Calu3 (cell line): ENCODE measurements at regions of chr7 and their contacts with region 1.

Region 1: DNA sequence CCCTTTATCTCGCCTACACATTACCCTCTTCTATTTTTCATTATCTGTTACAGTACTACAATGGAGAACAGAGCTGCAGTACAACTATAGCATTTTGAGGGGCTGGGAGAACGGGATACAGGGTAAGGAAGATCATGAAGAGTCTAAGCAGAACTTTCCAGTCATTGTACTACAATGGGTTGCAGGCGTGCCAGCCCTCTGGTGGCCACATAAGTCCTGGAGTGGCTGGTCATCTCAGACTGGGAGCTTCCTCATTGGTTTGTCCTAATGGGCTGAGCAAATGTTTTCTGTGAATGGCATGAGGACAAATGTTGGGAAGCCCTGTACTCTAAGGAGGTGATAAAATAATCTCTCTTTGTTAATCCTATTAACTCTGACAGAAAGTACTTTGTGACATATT is 33.0 kb downstream of the TMEM106B start:
- DNase-seq: peak; percentile 70
- H3K4me3 Mint-ChIP-seq: no peak overlapping the region
- H3K27ac Mint-ChIP-seq: no peak overlapping the region
- H3K4me1 Mint-ChIP-seq: no peaks in the 10 kb centered on the region
- H3K27me3 Mint-ChIP-seq: no peaks in the 10 kb centered on the region
- CTCF ChIP-seq: peak; percentile 71

Region 2: GRCh38 chr7:11427686-11428273 is 816.3 kb before region 1 on chr7:
- CTCF ChIA-PET with region 1: no interaction called
- intact Hi-C with region 1: loop called (anchors 10 kb)
- DNase-seq: peak; percentile 30
- H3K4me3 Mint-ChIP-seq: no peak overlapping the region
- H3K27ac Mint-ChIP-seq: no peak overlapping the region
- H3K4me1 Mint-ChIP-seq: no peaks in the 10 kb centered on the region
- H3K27me3 Mint-ChIP-seq: no peaks in the 10 kb centered on the region
- CTCF ChIP-seq: peak; percentile 65

Region 3: DNA sequence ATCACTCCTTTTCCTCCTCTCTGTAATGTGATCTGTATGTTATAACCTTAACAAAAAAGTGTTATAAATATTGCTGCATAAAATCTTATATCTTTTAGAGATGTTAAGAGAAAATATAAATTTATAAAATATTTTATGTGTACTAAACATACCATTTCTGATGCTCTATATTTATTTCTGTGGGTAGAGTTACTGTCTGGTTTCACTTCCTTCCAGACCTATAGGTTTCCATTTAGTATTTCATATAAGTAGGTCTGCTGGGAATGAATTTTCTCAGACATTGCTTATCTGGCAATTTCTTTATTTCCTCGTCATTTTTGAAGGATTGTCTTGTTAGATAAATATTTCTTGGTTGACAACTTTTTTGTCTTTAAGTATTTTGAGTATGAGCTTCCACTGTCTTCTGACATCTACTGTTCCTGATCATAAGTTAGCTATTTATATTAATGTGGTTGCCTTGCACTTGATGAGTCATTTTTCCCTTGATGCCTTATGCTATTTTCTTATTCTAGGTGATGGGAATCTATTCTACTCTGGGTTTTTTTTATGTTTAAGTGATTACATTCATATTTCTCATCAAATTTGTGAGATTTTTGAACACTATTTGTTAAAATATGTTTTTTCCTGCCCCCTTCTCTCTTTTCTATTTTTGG is 400.9 kb before region 1 on chr7:
- CTCF ChIA-PET with region 1: no interaction called
- intact Hi-C with region 1: loop called (anchors 5 kb)
- DNase-seq: no peak
- H3K4me3 Mint-ChIP-seq: no peak overlapping the region
- H3K27ac Mint-ChIP-seq: peak overlapping the region; percentile 3
- H3K4me1 Mint-ChIP-seq: peaks cover 29% of the 10 kb centered on the region
- H3K27me3 Mint-ChIP-seq: no peaks in the 10 kb centered on the region
- CTCF ChIP-seq: no peak

Region 4: DNA sequence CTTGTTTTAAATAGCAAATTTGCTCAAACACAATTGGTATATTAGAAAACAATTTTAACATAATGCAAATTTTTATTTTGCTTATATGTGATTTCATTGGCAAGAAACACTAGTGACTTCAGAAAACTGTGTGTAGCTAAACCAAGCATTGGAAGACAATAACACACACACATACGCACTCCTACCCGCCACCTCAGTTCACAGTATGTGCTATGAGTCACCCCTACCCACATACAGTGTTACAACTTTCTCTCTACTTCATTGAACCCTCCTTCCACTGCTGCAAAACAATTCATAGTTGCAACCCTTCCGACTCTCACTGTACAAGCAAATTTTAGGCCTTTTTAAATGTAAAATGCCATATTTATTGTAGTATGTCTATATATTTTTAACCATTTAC is 292.2 kb before region 1 on chr7:
- CTCF ChIA-PET with region 1: no interaction called
- intact Hi-C with region 1: no loop called
- DNase-seq: no peak
- H3K4me3 Mint-ChIP-seq: no peak overlapping the region
- H3K27ac Mint-ChIP-seq: no peak overlapping the region
- H3K4me1 Mint-ChIP-seq: no peaks in the 10 kb centered on the region
- H3K27me3 Mint-ChIP-seq: no peaks in the 10 kb centered on the region
- CTCF ChIP-seq: no peak

Region 5: DNA sequence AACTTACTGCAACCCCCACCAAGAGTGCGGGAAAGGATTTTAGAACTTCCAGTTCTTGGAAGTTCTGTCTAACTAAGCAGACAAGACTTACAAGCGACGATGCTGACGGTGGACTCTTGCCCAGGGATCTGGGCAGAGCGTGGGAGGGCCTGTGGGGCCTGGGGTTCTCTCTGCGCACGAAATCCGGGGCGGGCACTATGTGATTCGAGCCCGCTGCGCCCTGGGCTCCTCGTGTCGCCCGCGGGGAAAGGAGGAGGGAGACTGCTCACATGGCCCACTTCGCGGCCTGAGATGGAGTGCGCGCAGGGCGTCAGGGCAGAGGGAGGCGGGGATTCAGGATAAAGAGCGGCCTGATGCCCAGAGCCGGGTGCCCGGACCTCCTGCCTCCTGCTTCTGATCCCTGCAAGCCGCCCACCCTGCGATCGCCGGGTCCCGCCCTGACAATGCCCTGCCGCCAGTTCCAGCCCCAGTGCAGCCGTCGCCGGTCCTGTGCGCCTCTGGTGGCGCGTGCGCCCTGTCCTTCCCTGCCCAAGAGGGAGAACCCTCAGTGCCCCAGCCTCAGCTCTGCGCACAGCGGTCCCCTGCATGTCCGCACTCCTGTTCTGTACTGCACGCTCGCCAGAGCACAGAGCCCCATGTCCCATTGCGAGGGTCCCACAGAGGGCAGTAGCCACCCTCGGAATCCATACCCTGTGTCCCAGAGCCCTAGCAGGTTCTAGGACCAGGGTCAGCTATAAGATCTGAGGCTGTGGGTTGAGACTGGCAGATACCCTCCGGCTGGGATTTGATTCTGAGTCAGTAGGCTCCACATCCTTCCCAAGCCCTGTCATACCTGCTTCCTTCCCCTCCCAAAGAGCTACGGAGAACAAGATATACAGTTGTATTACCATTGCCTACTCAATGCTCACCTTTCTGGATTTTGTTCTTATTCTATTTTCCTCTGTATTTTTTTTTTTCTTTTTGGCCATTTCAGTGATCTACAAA is 132.4 kb before region 1 on chr7:
- CTCF ChIA-PET with region 1: interaction called, 6 read pairs
- intact Hi-C with region 1: loop called (anchors 5 kb)
- DNase-seq: peak; percentile 69
- H3K4me3 Mint-ChIP-seq: peak overlapping the region; percentile 86
- H3K27ac Mint-ChIP-seq: peak overlapping the region; percentile 27
- H3K4me1 Mint-ChIP-seq: peaks cover 47% of the 10 kb centered on the region
- H3K27me3 Mint-ChIP-seq: no peaks in the 10 kb centered on the region
- CTCF ChIP-seq: no peak

Region 6: DNA sequence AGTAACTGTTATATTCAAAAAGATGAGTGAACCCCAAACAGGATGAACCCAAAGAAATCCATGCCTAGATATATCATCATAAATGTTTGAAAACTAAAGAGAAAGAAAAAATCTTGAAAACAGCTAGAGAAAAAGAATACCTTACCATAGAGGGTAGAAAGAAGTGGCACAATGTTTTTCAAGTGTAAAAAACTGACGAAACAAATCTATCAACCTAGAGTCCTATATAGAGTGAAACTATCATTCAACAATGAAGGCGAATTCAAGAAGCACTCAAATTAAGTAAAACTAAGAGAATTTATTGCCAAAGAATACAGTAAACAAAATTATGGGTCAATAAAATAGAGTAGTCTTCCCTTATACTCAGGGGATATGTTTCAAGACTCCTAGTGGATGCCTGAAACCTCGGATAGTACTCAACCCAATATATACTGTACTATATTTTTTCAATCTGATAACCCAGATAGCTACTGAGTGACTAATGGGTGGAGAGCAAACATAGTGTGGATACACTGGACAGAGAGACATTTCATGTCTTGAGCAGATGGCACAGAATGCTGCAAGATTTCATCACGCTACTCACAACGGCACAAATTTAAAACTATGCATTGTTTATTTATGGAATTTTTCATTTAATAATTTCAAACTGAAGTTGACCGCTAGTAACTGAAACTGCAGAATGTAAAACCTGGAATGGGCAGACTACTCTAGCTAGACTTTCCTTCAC is 85.6 kb before region 1 on chr7:
- CTCF ChIA-PET with region 1: no interaction called
- intact Hi-C with region 1: no loop called
- DNase-seq: no peak
- H3K4me3 Mint-ChIP-seq: no peak overlapping the region
- H3K27ac Mint-ChIP-seq: peak overlapping the region; percentile 3
- H3K4me1 Mint-ChIP-seq: peaks cover 31% of the 10 kb centered on the region
- H3K27me3 Mint-ChIP-seq: no peaks in the 10 kb centered on the region
- CTCF ChIP-seq: no peak

Region 7: DNA sequence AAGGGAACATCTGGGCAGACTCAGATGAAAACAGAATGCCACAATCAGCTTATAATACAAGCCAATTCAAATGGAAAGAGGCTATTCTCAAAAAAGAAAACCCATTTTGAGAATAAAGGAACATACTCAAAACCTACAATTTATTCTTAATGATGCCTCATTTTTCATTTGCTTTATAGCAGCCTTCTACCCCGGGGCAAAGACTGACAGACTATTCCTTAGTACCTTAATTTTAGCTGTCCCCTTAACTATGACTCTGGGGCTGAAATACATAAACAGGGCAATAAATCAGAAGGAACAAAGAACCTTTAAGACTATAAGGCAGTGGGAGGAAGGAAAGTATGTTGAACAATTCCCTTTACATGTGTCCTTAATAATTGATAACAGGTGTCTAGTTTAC is 43.8 kb after region 1 on chr7:
- CTCF ChIA-PET with region 1: no interaction called
- intact Hi-C with region 1: no loop called
- DNase-seq: no peak
- H3K4me3 Mint-ChIP-seq: no peak overlapping the region
- H3K27ac Mint-ChIP-seq: no peak overlapping the region
- H3K4me1 Mint-ChIP-seq: no peaks in the 10 kb centered on the region
- H3K27me3 Mint-ChIP-seq: no peaks in the 10 kb centered on the region
- CTCF ChIP-seq: no peak

Region 8: DNA sequence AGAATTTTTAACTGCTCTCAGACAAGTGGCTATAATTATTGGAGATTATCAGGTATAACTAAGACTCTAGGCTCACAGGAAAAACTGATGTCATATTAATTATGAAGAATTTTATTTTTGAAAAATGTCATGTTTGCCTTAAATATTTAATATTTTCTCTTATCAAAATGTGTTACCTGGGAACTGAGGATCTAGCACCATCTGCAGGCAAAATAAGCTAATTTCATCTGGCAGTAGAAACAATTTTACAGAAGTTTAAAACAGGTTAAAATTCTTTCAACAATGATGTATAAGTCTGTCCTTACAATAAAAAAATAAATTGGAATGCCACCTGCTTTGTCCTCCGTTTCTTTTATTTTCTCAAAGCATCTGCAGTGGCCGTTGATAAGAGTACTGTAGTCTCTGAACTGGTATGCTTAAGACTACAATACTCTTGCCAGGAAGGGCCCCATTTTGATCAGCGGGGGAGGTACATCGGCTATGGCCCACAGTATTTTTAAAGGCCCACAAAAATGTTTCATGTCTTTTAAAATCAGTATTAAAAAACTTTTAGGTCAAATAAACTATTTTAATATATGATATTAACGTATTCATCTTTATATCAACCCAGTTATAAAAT is 78.3 kb after region 1 on chr7:
- CTCF ChIA-PET with region 1: interaction called, 5 read pairs
- intact Hi-C with region 1: loop called (anchors 2 kb)
- DNase-seq: peak; percentile 21
- H3K4me3 Mint-ChIP-seq: no peak overlapping the region
- H3K27ac Mint-ChIP-seq: no peak overlapping the region
- H3K4me1 Mint-ChIP-seq: peaks cover 11% of the 10 kb centered on the region
- H3K27me3 Mint-ChIP-seq: no peaks in the 10 kb centered on the region
- CTCF ChIP-seq: peak; percentile 74